RWPE1 (cell line): ENCODE measurements at regions of chr17 and their contacts with region 1.

Region 1: DNA sequence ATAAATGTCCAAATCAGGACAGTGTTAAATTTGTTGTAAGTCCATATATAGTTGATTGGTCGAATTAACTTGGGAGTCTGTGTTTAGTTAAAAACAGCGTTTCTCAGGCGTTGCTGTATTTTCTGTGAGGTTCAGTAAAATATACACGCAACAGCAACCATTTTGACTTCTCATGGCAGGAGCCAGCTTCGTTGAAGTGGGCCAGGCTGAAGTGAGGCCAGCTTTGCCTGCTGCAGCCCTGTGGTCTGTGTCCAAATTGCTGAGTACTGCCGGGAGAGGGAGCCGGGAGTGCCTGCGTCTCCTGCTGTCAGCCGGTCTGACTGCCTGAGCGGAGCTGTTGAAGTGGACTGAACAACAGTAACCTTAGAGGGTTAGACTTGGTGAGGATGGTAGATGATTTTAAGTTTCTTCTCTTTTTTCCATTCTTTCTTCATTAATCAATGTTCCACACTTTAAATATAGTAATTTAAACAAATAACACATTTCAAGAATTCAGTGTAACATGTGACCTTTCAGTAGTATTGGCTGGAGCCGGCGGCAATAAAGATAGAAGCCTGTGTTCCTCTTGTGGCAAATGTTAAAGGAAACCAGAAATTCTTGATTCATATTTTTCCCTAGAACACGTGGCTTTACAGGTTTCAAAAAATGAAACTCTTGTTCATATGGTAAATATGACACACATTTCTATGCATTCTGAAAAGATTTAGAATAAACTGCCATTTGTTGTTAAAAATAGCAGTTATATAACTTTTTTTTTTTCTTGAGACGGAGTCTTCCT is 37.0 kb upstream of the ZNF750 start:
- DNase-seq: peak; percentile 80
- H3K27ac ChIP-seq: peak overlapping the region; percentile 97
- CTCF ChIP-seq: peak; percentile 43

Region 2: DNA sequence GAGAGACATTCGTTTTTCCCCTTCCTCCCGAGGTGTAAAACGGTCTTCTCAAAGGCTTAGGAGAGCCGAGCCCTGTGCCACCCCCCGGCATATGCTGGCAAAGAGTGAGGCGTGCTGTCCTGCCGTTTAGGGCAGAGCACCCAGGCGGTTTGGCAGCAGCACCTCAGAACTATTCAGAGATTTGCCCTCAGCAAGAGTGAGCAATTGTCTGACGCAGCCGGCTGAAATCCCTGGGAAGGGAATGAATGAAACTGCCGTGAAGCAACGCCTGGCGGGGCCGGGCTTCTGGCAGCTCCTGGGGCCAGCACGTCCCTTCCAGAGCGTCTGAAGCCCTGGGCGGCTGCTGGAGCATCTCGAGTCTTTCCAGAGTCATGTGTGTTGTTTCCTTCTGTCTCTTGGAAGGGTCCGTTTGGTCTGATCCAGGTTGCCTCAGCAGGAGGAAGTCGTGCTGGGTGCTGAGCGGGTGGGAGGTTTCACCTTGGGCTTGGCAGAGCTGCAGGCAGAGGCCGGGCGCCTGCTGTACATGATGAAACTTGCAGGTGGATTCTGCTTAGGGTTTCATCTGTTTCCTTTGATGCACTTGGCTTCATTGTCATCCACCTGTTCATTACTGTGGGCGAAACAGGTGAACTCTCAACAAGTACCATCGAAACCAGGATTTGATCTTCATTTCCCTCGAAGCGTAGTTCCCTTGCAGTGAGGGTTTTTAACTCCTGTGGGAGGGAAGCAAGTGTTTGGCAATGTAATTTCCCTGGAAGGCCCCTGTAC is 89.5 kb before region 1 on chr17:
- CTCF ChIA-PET with region 1: interaction called, 11 read pairs
- POLR2A ChIA-PET with region 1: no interaction called
- DNase-seq: peak; percentile 89
- H3K27ac ChIP-seq: peak overlapping the region; percentile 91
- CTCF ChIP-seq: no peak

Region 3: GRCh38 chr17:82799591-82799990 is 77.2 kb before region 1 on chr17:
- CTCF ChIA-PET with region 1: no interaction called
- POLR2A ChIA-PET with region 1: no interaction called
- DNase-seq: no peak
- H3K27ac ChIP-seq: no peak overlapping the region
- CTCF ChIP-seq: no peak

Region 4: DNA sequence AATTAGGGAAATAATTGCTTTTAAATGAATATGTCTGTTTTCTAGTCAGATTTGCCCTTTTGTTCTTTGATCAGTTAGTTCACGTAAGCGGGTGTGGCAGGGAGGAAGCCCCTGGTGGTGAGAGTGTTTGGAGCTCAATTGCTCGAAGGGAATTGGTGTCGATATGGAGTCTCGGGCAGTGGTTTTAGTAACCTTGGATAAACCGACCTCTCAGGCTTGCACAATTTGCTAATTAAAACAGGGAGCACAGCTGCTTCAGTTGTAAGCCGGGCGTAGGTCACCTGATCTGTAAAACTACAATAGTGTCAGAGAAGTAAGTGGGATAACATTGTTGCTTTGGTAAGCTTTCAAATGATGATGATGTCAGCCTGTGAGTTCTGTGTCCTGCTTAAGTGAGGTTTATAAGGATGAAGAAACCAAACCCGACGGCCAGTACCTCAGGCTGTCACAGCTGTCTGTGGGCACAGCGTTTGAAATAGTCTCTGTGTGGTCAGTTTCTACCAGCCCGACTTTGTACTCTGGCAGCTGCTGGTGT is 39.9 kb before region 1 on chr17:
- CTCF ChIA-PET with region 1: interaction called, 20 read pairs
- POLR2A ChIA-PET with region 1: interaction called, 12 read pairs
- DNase-seq: no peak
- H3K27ac ChIP-seq: peak overlapping the region; percentile 97
- CTCF ChIP-seq: no peak

Region 5: DNA sequence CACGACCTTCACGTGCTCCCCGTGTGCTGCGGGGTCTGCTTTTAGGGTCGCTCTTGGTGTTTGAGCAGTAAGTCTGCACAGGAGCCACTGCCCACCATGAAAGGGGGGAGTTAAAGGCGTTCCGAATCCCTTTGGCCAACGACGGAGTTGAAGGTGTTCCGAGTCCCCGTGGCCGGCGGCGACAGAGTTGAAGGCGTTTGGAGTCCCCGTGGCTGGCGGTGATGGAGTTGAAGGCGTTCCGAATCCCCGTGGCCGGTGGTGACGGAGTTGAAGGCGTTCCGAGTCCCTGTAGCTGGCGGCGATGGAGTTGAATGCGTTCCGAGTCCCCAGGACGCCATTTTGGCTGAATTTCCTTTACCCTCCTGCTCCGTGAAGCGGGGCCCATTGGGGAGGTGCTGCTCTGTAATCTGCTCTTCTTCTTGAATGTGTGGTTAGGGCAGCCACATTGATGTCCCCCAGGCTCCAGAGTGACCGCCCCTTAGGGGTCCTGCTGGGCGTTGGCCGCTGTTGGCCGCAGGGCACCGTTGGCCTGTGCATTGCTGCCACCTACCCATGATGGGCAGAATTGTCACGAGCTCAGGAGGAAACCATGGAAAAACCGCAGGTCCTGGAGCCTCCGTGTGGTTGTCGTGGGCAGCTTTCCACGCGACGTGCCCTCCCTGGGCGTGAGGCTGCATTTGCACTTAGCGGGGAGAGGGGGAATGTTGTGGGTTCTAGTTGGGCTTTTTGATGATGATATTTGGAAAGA is 36.7 kb after region 1 on chr17:
- CTCF ChIA-PET with region 1: interaction called, 11 read pairs
- POLR2A ChIA-PET with region 1: interaction called, 3 read pairs
- DNase-seq: peak; percentile 16
- H3K27ac ChIP-seq: no peak overlapping the region
- CTCF ChIP-seq: peak; percentile 14; the same call in 1 of the 2 replicates

Region 6: GRCh38 chr17:82924798-82925197 is 48.0 kb after region 1 on chr17:
- CTCF ChIA-PET with region 1: no interaction called
- POLR2A ChIA-PET with region 1: no interaction called
- DNase-seq: peak; percentile 31
- H3K27ac ChIP-seq: peak overlapping the region; percentile 2; the same call in 1 of the 2 replicates
- CTCF ChIP-seq: no peak